ENCODE measurements at regions of chr11 and their contacts with region 1.

Region 1: DNA sequence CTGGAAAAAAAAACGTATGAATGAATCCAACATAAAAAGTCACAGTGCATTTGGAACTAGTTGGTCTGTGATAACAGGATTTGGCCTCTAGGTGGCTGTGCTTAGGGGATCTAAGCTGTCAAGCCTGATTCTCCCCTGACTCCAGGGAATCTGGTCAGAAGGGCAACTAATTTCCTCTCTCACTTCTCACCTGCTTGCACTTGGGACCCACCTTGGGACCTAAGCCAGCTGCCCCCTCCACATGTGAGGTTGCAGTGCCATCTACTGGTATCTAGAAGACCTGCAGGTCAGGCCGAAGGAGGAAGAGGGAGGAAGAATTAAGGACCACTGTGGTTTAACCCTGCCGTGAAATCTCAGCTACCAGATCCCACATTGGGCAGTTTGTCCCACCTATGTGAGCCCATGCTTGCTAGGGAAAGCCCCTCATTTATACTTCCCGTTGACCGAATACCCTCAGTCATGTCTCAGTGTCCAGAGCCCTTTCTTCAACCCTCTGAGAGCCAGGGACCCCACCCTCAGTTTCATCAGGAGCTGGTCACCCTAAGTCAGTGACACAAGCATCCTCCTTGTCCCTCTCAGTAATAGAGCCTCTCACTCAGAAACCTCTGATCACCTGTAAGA is 33.2 kb upstream of the CAVIN3 start:
- DNase-seq: peak; percentile 91 to 92
- H3K4me3 ChIP-seq: no peak overlapping the region
- H3K4me3 Mint-ChIP-seq: no peak overlapping the region
- H3K27ac Mint-ChIP-seq: no peak overlapping the region
- H3K4me1 ChIP-seq: peaks cover 10% of the 10 kb centered on the region
- H3K4me1 Mint-ChIP-seq: peaks cover 24% of the 10 kb centered on the region
- H3K27me3 ChIP-seq: no peaks in the 10 kb centered on the region
- H3K27me3 Mint-ChIP-seq: no peaks in the 10 kb centered on the region
- CTCF ChIP-seq: peak; percentile 87 to 96

Region 2: GRCh38 chr11:5992604-5993251 is 360.7 kb before region 1 on chr11:
- CTCF ChIA-PET with region 1: interaction called, 9 read pairs
- POLR2A ChIA-PET with region 1: no interaction called
- intact Hi-C with region 1: loop called (anchors 1 kb)
- DNase-seq: peak in 1 of 2 experiments; percentile 25
- H3K4me3 ChIP-seq: no peak overlapping the region
- H3K4me3 Mint-ChIP-seq: no peak overlapping the region
- H3K27ac Mint-ChIP-seq: no peak overlapping the region
- H3K4me1 ChIP-seq: no peaks in the 10 kb centered on the region
- H3K4me1 Mint-ChIP-seq: no peaks in the 10 kb centered on the region
- H3K27me3 ChIP-seq: no peaks in the 10 kb centered on the region
- H3K27me3 Mint-ChIP-seq: peaks cover 8% of the 10 kb centered on the region
- CTCF ChIP-seq: peak; percentile 65 to 74

Region 3: GRCh38 chr11:6234387-6235107 is 118.9 kb before region 1 on chr11 and contains the start of gene FHIP1B:
- CTCF ChIA-PET with region 1: interaction called, 3 read pairs
- POLR2A ChIA-PET with region 1: no interaction called
- intact Hi-C with region 1: loop called (anchors 5 kb)
- DNase-seq: peak; percentile 100
- H3K4me3 ChIP-seq: peak within 1 kb of the TSS; percentile 89
- H3K4me3 Mint-ChIP-seq: peak within 1 kb of the TSS; percentile 87
- H3K27ac Mint-ChIP-seq: peak within 1 kb of the TSS; percentile 90
- H3K4me1 ChIP-seq: peaks cover 19% of the 10 kb centered on the region
- H3K4me1 Mint-ChIP-seq: peaks cover 19% of the 10 kb centered on the region
- H3K27me3 ChIP-seq: no peaks in the 10 kb centered on the region
- H3K27me3 Mint-ChIP-seq: no peaks in the 10 kb centered on the region
- CTCF ChIP-seq: no peak
- total RNA-seq, gene FHIP1B: 26.8 and 27.8 TPM in 2 replicates

Region 4: DNA sequence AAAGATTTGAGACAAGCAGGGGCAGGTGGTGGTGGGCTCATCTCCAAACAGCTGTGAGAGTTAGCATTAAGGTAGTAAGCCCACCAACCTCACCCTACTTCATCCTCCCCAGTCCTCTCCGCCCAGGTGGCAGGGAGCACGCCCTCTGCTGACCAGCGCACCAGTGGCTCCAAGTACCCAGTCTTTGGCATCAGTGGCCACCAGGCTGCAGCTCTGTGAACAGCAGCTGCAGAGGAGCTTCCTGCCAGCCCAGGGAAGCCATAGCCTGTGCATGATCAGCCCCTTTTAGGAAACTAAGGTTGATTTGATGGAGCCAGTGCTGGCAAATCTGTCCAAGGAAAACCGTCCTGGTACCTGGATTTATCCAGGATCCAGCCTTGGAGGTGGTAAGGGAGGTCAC is 54.9 kb before region 1 on chr11:
- CTCF ChIA-PET with region 1: interaction called, 7 read pairs
- POLR2A ChIA-PET with region 1: no interaction called
- intact Hi-C with region 1: loop called (anchors 1 kb)
- DNase-seq: peak; percentile 72 to 76
- H3K4me3 ChIP-seq: no peak overlapping the region
- H3K4me3 Mint-ChIP-seq: no peak overlapping the region
- H3K27ac Mint-ChIP-seq: no peak overlapping the region
- H3K4me1 ChIP-seq: no peaks in the 10 kb centered on the region
- H3K4me1 Mint-ChIP-seq: no peaks in the 10 kb centered on the region
- H3K27me3 ChIP-seq: no peaks in the 10 kb centered on the region
- H3K27me3 Mint-ChIP-seq: no peaks in the 10 kb centered on the region
- CTCF ChIP-seq: peak; percentile 75 to 96

Region 5: GRCh38 chr11:6323291-6323905 is 30.1 kb before region 1 on chr11:
- CTCF ChIA-PET with region 1: interaction called, 13 read pairs
- POLR2A ChIA-PET with region 1: no interaction called
- intact Hi-C with region 1: loop called (anchors 1 kb)
- DNase-seq: peak; percentile 39 to 50
- H3K4me3 ChIP-seq: no peak overlapping the region
- H3K4me3 Mint-ChIP-seq: peak overlapping the region; percentile 8
- H3K27ac Mint-ChIP-seq: peak overlapping the region; percentile 64
- H3K4me1 ChIP-seq: peaks cover 9% of the 10 kb centered on the region; the same call in 1 of the 2 replicates
- H3K4me1 Mint-ChIP-seq: peaks cover 21% of the 10 kb centered on the region
- H3K27me3 ChIP-seq: no peaks in the 10 kb centered on the region
- H3K27me3 Mint-ChIP-seq: no peaks in the 10 kb centered on the region
- CTCF ChIP-seq: no peak